IMR-90 (cell line): ENCODE measurements at regions of chr7 and their contacts with region 1.

Region 1: GRCh38 chr7:16260236-16260728 is 161.1 kb downstream of the CRPPA start:
- DNase-seq: no peak
- ATAC-seq: no peak
- H3K4me3 ChIP-seq: no peak overlapping the region
- H3K27ac ChIP-seq: no peak overlapping the region
- H3K4me1 ChIP-seq: no peaks in the 10 kb centered on the region
- H3K27me3 ChIP-seq: no peaks in the 10 kb centered on the region
- CTCF ChIP-seq: no peak
- POLR2A ChIP-seq: no peak
- RAD21 ChIP-seq: no peak

Region 2: DNA sequence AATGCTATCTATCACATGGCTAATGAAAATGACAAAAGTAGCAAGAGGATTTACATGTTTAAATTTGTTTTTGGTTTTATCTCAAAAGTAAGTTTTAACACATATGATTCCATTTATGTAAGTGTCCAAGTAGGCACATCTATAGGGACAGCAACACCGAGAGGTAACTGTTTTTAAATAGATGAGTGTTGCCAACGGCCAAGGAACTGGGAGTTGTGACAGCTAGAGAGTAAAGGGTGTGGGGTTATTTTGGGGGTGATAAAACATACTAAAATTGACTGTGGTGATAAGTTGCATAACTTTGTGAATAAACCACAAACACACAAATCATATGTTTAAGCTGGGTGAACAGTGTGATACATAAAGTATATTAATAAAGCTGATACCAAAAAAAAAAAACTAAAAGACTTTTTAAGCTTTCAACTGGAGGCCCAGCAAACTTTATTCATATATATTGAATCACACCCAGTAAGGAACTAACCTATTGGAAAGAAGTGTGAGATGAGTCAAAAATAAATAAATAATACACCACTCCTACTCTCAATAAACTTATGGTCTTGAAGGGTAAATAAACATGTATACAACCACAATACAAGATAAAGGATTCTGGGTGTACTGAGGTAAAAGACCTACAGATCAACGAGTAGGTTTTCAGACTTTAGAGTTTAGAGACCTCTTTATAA is 299.4 kb after region 1 on chr7:
- CTCF ChIA-PET with region 1: no interaction called
- POLR2A ChIA-PET with region 1: no interaction called
- dilution Hi-C with region 1: no loop called
- in situ Hi-C with region 1: no loop called
- intact Hi-C with region 1: loop called (anchors 5 kb)
- DNase-seq: no peak
- ATAC-seq: no peak
- H3K4me3 ChIP-seq: no peak overlapping the region
- H3K27ac ChIP-seq: no peak overlapping the region
- H3K4me1 ChIP-seq: no peaks in the 10 kb centered on the region
- H3K27me3 ChIP-seq: no peaks in the 10 kb centered on the region
- CTCF ChIP-seq: no peak
- POLR2A ChIP-seq: no peak
- RAD21 ChIP-seq: no peak